HEK293T (cell line): ENCODE measurements at regions of chr19 and their contacts with region 1.

Region 1: GRCh38 chr19:2648528-2648937 is 54.0 kb downstream of the GNG7 start:
- DNase-seq: peak; percentile 78

Region 2: DNA sequence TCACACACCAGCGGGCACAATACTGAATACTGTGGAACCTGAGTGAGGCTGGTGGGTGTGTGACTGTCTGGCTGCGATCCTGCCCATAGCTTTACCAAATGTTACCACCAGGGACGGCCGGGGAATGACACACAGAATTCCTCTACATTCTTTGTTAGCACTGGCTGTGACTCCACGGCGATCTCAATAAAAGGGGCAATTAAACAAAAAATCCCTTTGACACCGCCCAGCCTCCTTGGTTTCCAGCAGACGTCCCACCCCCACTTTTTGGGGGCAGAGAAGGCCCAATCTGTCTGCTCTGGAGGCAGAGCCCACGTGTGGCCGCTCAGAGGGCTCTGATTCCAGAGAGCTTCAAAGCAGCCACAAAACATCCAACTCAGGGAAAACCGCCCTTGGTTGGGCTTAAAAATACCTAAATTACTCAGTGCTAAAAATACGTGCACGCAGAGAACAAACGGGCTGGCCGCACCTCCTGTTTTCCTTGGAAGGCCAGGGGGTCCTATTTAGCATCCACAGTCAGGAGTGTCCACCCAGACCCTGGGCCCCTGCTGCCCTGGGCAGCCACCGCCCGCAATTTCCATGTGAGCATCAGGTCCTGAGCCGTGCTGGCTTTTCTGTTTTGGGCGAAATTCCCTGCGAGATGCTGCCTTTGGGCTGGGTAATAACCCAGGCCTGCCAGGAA is 124.8 kb before region 1 on chr19:
- CTCF ChIA-PET with region 1: no interaction called
- POLR2A ChIA-PET with region 1: no interaction called
- DNase-seq: peak; percentile 43

Region 3: DNA sequence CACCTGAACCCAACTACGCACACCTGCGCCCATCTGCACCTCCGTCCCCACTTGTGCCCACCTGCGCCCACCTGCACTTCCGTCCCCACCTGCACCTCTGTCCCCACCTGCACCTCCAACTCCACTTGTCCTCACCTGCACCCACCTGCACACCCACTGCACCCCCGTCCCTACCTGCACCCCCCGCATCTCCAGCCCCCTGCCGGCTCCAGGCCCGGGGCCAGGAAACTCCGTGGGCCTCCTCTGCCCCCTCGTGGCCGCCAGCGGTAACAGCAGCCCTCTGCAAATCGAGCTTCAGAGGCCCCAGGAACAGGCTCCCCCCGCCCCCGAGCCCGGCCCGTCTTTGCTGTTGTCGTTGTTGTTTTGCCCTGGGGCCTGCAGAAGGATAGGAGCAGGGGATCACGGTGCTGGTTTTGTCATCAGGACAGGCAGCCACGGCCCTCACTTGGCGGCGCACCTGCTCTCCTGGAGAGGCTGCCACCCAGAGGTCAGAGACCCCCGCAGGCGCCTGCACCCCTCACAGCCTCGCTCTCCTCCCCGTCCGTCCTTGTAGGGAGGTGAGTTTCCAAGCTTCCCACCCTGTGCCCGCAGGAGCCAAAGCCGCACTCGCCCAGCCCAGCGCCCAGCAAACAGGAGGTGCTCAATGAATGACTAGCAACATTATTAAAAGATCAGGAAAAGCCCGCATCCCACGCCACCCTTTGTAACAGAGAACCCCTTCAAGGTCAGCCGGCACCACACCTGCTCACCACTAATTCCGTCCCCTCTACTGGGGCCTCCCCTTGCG is 11.4 kb before region 1 on chr19:
- CTCF ChIA-PET with region 1: interaction called, 11 read pairs
- POLR2A ChIA-PET with region 1: no interaction called
- DNase-seq: peak; percentile 74

Region 4: DNA sequence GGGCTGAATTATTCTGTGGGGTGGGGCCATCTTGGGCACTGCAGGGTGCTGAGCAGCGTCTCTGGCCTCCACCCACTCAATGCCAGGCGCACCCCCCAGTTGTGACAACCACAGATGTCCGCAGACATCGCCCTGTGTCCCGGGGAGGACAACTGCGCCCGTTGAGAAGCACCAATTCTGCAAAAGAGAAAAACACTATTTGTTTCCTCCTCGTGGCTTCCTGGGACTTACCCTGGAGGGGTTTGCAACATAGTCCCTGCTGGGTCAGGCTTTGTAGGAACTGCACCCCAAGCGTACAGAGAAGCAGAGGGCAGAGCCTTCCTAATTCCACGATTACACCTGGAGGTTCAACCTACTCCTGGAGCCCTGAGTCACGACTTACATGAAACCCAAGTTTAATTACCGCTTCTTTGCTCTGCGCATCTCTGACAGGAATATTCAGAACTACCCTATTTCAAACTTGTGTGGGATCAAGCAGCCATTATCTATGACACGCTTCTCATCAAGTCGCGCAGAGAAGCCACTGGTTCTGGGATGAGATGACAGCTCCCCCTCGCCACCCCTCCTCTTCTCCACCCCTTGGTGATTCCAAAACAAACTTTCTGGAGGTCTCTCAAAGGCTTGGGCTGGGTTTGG is 102.4 kb after region 1 on chr19:
- CTCF ChIA-PET with region 1: interaction called, 26 read pairs
- POLR2A ChIA-PET with region 1: no interaction called
- DNase-seq: no peak